CD4-positive, alpha-beta memory T cell (primary cell): ENCODE measurements at regions of chr10 and their contacts with region 1.

Region 1: DNA sequence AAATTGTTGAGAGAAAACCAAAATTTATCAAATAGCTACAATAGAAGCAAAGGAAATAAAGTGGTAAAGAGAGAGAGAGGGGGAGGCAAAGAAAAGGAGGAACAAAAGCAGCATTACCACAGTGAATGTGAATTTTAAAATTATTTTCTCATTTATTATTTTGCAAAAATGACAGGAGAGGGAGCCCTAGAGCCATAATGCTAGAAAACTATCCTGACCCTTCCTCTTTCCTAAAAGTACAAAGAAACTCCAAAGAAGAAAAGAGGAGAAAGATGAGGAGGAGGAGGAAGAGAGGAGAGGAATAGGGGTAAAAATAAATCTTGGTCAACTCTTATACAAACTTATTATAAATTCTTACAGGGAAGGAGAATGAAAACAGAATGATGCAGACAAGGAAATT is 921.5 kb downstream of the NRG3 start:
- DNase-seq: no peak
- H3K4me3 ChIP-seq: no peak overlapping the region
- H3K4me3 Mint-ChIP-seq: no peak overlapping the region
- H3K27ac ChIP-seq: no peak overlapping the region
- H3K27ac Mint-ChIP-seq: no peak overlapping the region
- H3K4me1 ChIP-seq: no peaks in the 10 kb centered on the region
- H3K4me1 Mint-ChIP-seq: no peaks in the 10 kb centered on the region
- H3K27me3 ChIP-seq: no peaks in the 10 kb centered on the region
- H3K27me3 Mint-ChIP-seq: no peaks in the 10 kb centered on the region

Region 2: DNA sequence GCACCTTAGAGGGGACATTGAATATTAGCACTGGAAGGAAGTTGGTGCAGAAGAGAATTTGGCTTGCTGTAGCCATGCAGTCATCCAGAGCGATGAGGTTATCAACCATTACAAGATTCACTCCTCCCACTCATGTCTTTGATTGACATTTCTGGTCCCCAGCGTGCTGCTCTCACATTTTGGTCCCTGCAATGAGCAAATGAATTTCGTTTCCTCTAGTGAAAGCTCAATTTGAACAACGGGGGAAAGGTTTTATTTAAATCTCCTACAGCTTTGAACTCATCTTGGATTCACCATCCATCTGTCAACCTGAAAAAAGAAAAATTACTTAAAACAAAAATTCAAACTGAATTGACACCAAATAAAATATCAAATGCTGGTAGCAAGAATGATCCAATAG is 53.7 kb after region 1 on chr10:
- CTCF ChIA-PET with region 1: no interaction called
- POLR2A ChIA-PET with region 1: no interaction called
- intact Hi-C with region 1: loop called (anchors 1 kb)
- DNase-seq: no peak
- H3K4me3 ChIP-seq: no peak overlapping the region
- H3K4me3 Mint-ChIP-seq: no peak overlapping the region
- H3K27ac ChIP-seq: no peak overlapping the region
- H3K27ac Mint-ChIP-seq: no peak overlapping the region
- H3K4me1 ChIP-seq: no peaks in the 10 kb centered on the region
- H3K4me1 Mint-ChIP-seq: peaks cover 0 to 2% (median 0%) of the 10 kb centered on the region in 4 donors
- H3K27me3 ChIP-seq: no peaks in the 10 kb centered on the region
- H3K27me3 Mint-ChIP-seq: no peaks in the 10 kb centered on the region